ENCODE measurements at regions of chr15 and their contacts with region 1.

Region 1: DNA sequence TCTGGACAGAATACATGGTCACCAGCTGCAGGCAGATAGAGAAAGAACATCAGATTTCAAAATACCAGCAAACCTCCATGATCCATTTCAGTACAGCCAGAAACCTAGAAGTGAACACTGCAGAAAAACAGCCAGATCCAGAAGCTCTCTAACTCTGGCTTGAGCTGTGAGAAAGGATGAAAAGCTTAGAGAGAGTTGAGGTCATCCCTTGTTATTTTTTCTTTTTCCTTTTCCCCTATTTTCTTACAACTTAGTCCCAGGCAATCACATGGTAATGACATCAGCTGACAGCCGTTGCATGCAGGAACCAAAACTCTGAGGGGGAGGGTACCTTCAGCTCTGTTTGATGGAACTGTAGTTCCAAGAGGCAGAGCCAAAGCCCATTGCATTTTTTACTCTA is 113.2 kb downstream of the TCF12 start:
- DNase-seq: no peak
- ATAC-seq: no peak
- H3K4me3 ChIP-seq: no peak overlapping the region
- H3K27ac ChIP-seq: 0 out of 2 replicates have a peak overlapping the region, but pooled peaks have one; percentile 15
- H3K4me1 ChIP-seq: 0 out of 2 replicates have a peak, but pooled peaks cover 4% of the 10 kb centered on the region
- H3K27me3 ChIP-seq: no peaks in the 10 kb centered on the region
- CTCF ChIP-seq: no peak

Region 2: DNA sequence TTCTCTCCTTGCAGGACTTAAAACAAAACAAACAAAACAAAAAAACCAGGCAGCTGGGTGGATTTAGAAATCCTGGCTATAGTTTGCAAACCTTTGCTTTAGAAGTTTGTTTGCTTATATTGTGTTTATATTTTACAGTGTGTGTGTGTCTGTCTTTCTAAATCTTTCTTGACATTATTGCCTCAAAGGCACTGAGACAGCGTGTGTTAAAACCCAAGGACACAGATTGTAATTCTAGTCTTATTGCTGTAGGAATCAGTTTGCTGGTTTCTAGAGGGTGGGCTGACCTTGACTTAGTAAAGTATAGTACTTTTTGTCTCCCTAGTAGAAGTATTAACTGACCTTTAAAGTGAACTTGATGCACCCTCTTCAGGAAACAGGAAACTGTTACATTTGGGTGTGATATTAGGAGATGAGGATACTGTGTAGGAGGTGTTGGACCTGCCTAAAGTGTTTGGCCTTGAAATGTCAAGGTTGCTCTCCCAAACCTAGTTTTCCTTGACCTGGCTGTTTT is 42.1 kb before region 1 on chr15:
- CTCF ChIA-PET with region 1: no interaction called
- POLR2A ChIA-PET with region 1: no interaction called
- in situ Hi-C with region 1: no loop called
- intact Hi-C with region 1: no loop called
- DNase-seq: no peak
- ATAC-seq: no peak
- H3K4me3 ChIP-seq: no peak overlapping the region
- H3K27ac ChIP-seq: peak overlapping the region; percentile 6; the same call in 1 of the 2 replicates
- H3K4me1 ChIP-seq: peaks cover 23% of the 10 kb centered on the region
- H3K27me3 ChIP-seq: no peaks in the 10 kb centered on the region
- CTCF ChIP-seq: no peak

Region 3: DNA sequence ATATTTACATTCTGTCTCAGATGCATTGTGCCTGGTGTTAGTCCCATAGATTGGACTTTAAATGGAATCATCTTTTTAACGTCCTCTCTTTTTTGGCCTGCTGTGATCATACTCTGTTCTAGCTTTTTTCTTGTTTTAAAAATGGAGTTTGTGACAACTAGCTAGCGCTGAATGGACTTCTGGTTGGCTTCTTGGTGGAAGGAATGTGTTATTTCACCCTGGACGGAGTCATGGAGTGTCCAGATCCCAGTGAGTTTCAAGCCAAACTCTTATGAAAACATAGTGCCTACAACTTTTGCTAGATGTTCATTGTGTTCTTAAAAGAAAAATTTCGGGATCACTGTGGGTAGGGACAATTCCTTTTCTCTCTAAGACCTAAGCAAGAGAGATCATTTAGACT is 79.4 kb after region 1 on chr15:
- CTCF ChIA-PET with region 1: no interaction called
- POLR2A ChIA-PET with region 1: no interaction called
- in situ Hi-C with region 1: no loop called
- intact Hi-C with region 1: no loop called
- DNase-seq: no peak
- ATAC-seq: no peak
- H3K4me3 ChIP-seq: no peak overlapping the region
- H3K27ac ChIP-seq: no peak overlapping the region
- H3K4me1 ChIP-seq: no peaks in the 10 kb centered on the region; the same call in 1 of the 2 replicates
- H3K27me3 ChIP-seq: no peaks in the 10 kb centered on the region
- CTCF ChIP-seq: peak; percentile 8; the same call in 1 of the 2 replicates

Region 4: DNA sequence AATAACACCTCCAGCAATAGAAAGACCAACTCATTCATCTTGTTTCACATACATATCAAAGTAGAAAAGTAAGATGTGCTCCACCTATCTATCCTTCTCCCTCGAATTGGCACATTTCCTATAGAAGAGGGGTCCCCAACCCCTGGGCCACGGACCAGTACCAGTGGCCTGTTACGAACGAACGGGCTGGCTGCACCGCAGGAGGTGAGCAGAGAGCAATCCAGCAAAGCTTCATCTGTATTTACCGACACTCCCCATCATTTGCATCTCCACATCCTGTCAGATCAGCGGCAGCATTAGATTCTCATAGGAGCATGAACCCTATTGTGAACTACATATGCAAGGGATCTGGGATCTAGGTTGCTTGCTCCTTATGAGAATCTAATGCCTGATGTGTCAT is 249.7 kb after region 1 on chr15:
- CTCF ChIA-PET with region 1: no interaction called
- POLR2A ChIA-PET with region 1: interaction called, 11 read pairs
- in situ Hi-C with region 1: no loop called
- intact Hi-C with region 1: no loop called
- DNase-seq: no peak
- ATAC-seq: no peak
- H3K4me3 ChIP-seq: no peak overlapping the region
- H3K27ac ChIP-seq: no peak overlapping the region
- H3K4me1 ChIP-seq: no peaks in the 10 kb centered on the region
- H3K27me3 ChIP-seq: no peaks in the 10 kb centered on the region
- CTCF ChIP-seq: no peak